ENCODE measurements at regions of chr7 and their contacts with region 1.

Region 1: DNA sequence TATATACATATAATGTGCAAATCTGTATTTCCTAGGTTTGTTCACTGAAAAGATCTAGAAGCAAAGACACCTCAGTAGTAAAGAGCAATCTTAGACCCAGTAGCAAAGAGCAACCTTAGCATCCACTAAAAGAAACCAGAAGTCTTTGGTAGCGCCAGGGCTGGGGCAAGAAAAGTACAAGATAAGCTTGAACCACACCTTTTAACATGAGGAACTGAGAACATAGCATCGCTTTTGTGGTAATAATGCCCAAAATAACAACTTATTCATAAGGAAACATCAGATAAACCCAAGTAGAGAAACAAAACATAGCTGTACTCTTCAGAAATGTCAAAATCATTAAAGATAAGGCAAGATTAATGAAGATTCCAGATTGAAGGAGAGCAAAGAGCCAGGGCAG is 173.4 kb downstream of the IMMP2L start:
- DNase-seq: no peak
- ATAC-seq: no peak
- H3K4me3 ChIP-seq: no peak overlapping the region
- H3K4me3 Mint-ChIP-seq: no peak overlapping the region
- H3K27ac ChIP-seq: no peak overlapping the region
- H3K27ac Mint-ChIP-seq: no peak overlapping the region
- H3K4me1 ChIP-seq: no peaks in the 10 kb centered on the region
- H3K4me1 Mint-ChIP-seq: no peaks in the 10 kb centered on the region
- H3K27me3 ChIP-seq: no peaks in the 10 kb centered on the region
- H3K27me3 Mint-ChIP-seq: no peaks in the 10 kb centered on the region
- CTCF ChIP-seq: no peak

Region 2: GRCh38 chr7:111357691-111358090 is 31.2 kb before region 1 on chr7:
- CTCF ChIA-PET with region 1: no interaction called
- POLR2A ChIA-PET with region 1: no interaction called
- intact Hi-C with region 1: no loop called
- DNase-seq: no peak
- ATAC-seq: no peak
- H3K4me3 ChIP-seq: no peak overlapping the region
- H3K4me3 Mint-ChIP-seq: no peak overlapping the region
- H3K27ac ChIP-seq: no peak overlapping the region
- H3K27ac Mint-ChIP-seq: no peak overlapping the region
- H3K4me1 ChIP-seq: no peaks in the 10 kb centered on the region
- H3K4me1 Mint-ChIP-seq: no peaks in the 10 kb centered on the region
- H3K27me3 ChIP-seq: no peaks in the 10 kb centered on the region
- H3K27me3 Mint-ChIP-seq: no peaks in the 10 kb centered on the region
- CTCF ChIP-seq: no peak

Region 3: DNA sequence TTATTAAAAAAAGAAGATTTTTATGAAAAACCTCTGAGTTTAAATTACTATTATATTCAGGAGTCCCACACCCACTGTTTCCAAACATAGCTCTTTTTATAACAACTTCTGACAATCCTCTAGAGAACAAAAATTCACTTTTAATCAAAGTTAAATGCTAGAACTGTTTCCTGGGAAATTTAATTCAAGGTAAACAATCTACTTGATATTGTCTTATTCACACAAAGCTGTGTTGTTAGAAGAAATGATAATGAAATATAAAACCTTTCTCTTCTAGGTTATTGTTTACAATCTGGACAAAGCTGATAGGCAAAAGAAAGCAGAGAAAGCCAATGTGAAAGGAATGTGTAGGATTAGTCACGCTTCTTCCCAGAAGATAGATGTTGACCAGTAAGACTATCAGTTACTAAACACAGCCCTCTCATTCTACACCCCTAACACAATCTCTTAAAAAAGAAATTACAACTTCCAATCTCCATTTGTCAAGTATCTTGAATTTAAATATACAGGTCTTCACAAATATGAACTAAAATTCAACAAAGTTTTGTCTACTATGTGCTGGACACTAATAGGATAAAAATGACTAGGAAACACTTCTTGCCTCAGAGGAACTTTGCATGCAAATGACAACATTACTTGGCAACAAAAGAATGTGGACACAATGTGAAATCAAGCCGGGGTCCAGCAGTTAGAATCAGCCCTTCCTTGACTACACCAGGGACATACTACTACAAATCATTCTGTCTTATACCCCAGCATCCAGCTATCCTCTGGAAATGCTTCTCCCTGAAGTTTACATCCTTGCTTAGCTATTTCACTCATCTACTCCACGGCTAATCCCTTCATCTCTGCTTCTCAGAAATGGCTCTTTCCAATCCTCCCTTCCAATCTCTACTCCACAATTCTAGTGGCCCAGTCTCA is 49.7 kb after region 1 on chr7:
- CTCF ChIA-PET with region 1: no interaction called
- POLR2A ChIA-PET with region 1: no interaction called
- intact Hi-C with region 1: loop called in 1 of 2 experiments (anchors 5 kb)
- DNase-seq: no peak
- ATAC-seq: no peak
- H3K4me3 ChIP-seq: no peak overlapping the region
- H3K4me3 Mint-ChIP-seq: no peak overlapping the region
- H3K27ac ChIP-seq: no peak overlapping the region
- H3K27ac Mint-ChIP-seq: no peak overlapping the region
- H3K4me1 ChIP-seq: no peaks in the 10 kb centered on the region
- H3K4me1 Mint-ChIP-seq: peaks cover 2% of the 10 kb centered on the region
- H3K27me3 ChIP-seq: no peaks in the 10 kb centered on the region
- H3K27me3 Mint-ChIP-seq: no peaks in the 10 kb centered on the region
- CTCF ChIP-seq: no peak

Region 4: DNA sequence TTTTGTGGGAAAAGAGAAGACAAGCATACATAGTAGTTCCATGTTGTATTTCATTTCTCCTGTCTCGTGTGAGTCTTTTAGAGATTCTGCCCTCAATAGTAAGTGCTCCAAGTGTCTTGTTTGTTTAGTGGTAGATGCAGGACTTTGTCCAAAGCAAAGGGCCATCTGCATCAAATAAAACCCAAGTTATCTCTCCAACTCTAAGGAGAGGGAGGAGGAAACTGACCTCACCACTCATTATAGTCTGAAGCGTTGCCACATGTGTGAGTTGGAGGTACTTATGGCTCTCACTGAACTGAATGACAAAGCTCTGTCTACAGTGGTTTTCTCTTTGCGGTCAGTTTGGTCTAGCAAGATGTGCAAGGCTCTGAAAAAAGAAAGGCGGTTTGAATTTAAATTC is 544.7 kb after region 1 on chr7:
- CTCF ChIA-PET with region 1: no interaction called
- POLR2A ChIA-PET with region 1: no interaction called
- intact Hi-C with region 1: no loop called
- DNase-seq: no peak
- ATAC-seq: no peak
- H3K4me3 ChIP-seq: no peak overlapping the region
- H3K4me3 Mint-ChIP-seq: no peak overlapping the region
- H3K27ac ChIP-seq: no peak overlapping the region
- H3K27ac Mint-ChIP-seq: no peak overlapping the region
- H3K4me1 ChIP-seq: no peaks in the 10 kb centered on the region
- H3K4me1 Mint-ChIP-seq: no peaks in the 10 kb centered on the region
- H3K27me3 ChIP-seq: no peaks in the 10 kb centered on the region
- H3K27me3 Mint-ChIP-seq: no peaks in the 10 kb centered on the region
- CTCF ChIP-seq: no peak

Region 5: GRCh38 chr7:112965513-112965912 is 1576.6 kb after region 1 on chr7:
- CTCF ChIA-PET with region 1: no interaction called
- POLR2A ChIA-PET with region 1: no interaction called
- intact Hi-C with region 1: no loop called
- DNase-seq: no peak
- ATAC-seq: no peak
- H3K4me3 ChIP-seq: no peak overlapping the region
- H3K4me3 Mint-ChIP-seq: no peak overlapping the region
- H3K27ac ChIP-seq: no peak overlapping the region
- H3K27ac Mint-ChIP-seq: no peak overlapping the region
- H3K4me1 ChIP-seq: no peaks in the 10 kb centered on the region
- H3K4me1 Mint-ChIP-seq: no peaks in the 10 kb centered on the region
- H3K27me3 ChIP-seq: peaks cover 0 to 3% of the 10 kb centered on the region in 2 experiments
- H3K27me3 Mint-ChIP-seq: peaks cover 20% of the 10 kb centered on the region
- CTCF ChIP-seq: no peak

Measured in CD8-positive, alpha-beta T cell (primary cell).